HEK293 (cell line): ENCODE measurements at regions of chr11 and their contacts with region 1.

Region 1: GRCh38 chr11:116467807-116468206 is 305.0 kb downstream of the BUD13 start:
- H3K4me3 ChIP-seq: no peak overlapping the region
- H3K27ac ChIP-seq: no peak overlapping the region
- H3K4me1 ChIP-seq: no peaks in the 10 kb centered on the region
- CTCF ChIP-seq: no peak

Region 2: DNA sequence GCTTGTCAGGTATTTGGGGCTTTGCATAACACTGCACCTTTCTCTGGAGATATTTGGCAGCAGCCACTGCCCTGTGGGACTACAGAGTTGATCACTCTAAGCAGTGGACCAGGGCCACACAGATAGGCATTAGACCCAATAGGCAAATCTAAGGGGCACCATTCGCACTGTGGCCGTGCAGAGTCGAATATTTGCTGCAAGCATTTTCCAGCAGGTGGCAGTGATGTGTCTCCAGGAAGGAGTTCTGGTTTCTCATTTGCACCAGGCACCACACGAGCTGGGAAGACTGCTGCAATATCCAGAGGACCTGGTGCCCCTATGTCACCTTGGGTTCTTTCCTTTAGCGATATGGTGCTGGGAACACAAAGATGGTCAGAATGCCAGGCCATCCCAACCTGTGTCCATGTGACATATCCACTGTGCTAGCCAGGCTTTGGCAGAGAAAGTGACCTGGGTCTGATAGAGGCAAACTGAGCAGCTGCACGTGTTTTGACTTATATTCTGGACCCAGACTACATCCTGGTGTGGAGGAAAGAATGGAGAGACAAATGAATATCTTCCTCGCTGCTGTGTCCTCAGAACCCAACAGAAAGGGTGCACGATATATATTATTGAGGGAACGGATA is 13.7 kb before region 1 on chr11:
- CTCF ChIA-PET with region 1: interaction called, 13 read pairs
- POLR2A ChIA-PET with region 1: no interaction called
- H3K4me3 ChIP-seq: no peak overlapping the region
- H3K27ac ChIP-seq: no peak overlapping the region
- H3K4me1 ChIP-seq: peaks cover 1% of the 10 kb centered on the region
- CTCF ChIP-seq: no peak